ENCODE measurements at regions of chr11 and their contacts with region 1.

Region 1: GRCh38 chr11:6443269-6444003 is 2.6 kb upstream of the HPX start:
- DNase-seq: peak in 1 of 2 donors; percentile 61
- ATAC-seq: peak; percentile 82

Region 2: DNA sequence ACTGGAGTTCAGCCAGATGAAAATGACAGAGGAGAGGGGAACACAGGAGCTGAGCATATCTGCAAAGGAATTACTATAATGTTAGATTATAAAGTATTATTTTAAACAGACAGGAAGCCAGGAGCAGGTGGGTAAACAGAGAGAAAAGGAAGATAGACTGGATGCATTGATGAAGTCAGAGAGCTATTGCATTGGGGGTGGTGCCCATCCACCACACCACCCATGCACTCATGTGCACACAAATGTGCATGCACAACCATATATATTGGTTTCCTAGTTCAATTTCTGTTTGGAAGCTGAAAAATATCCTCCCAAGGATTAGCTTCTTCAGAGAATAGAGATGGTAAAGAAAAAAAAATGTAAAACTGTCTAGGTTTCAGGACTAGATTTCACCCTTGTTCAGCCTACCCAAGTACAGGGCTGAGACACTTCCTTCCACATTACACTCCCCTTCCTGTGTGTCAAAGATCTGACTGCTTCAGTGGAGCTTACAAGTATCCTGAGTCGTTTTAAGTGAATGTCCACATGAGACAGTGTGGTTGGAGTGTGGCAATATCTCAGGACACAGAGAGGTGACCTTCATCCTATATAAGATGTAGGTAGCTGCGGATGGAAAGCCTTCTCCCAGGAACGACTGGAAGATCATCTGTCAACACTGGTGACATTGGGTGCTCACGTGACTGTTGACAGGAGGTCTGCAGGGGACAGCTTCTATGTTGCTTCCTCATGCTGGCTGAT is 65.4 kb before region 1 on chr11:
- intact Hi-C with region 1: loop called (anchors 2 to 10 kb)
- DNase-seq: no peak
- ATAC-seq: peak; percentile 58

Region 3: GRCh38 chr11:6389921-6390724 is 53.3 kb before region 1 on chr11 and contains the start of gene SMPD1:
- intact Hi-C with region 1: loop called in 1 of 2 experiments (anchors 10 kb)
- DNase-seq: peak; percentile 95 to 96
- ATAC-seq: peak; percentile 93
- total RNA-seq, gene SMPD1: 50.8 to 136 TPM

Region 4: GRCh38 chr11:6505577-6506240 is 62.3 kb after region 1 on chr11:
- intact Hi-C with region 1: loop called in 1 of 2 experiments (anchors 10 kb)
- DNase-seq: no peak
- ATAC-seq: peak; percentile 84